ENCODE measurements at regions of chrX and their contacts with region 1.

Region 1: GRCh38 chrX:70096052-70096451 is 33.8 kb downstream of the OTUD6A start:
- DNase-seq: no peak
- H3K4me3 Mint-ChIP-seq: no peak overlapping the region
- H3K27ac Mint-ChIP-seq: no peak overlapping the region
- H3K4me1 Mint-ChIP-seq: no peaks in the 10 kb centered on the region
- H3K27me3 Mint-ChIP-seq: peaks cover 6% of the 10 kb centered on the region

Region 2: GRCh38 chrX:69538321-69538876 is 557.7 kb before region 1 on chrX:
- CTCF ChIA-PET with region 1: interaction called, 20 read pairs
- POLR2A ChIA-PET with region 1: no interaction called
- DNase-seq: peak; percentile 78
- H3K4me3 Mint-ChIP-seq: no peak overlapping the region
- H3K27ac Mint-ChIP-seq: no peak overlapping the region
- H3K4me1 Mint-ChIP-seq: peaks cover 15% of the 10 kb centered on the region
- H3K27me3 Mint-ChIP-seq: peaks cover 9% of the 10 kb centered on the region

Region 3: DNA sequence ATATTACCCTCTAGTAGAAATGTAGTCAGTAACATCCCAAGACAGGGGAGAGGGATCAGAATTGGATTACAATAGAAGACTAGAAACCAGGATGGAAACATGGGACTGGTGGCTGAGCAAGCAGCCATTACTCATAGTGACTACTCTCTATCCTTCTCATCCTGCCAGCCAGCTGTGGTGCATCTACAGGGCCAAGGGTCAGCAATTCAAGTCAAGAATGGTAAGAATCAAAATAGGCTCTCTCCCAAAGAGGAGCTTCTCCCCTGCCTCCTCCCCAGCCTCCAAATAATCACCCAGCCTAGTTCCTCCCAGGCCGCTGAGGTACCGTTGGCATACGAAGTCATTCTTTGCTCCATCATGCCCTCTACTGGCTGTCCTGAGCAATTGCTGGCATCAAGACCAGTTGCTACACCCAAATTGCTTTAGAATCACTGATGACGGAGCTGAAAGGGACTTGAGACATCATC is 65.7 kb before region 1 on chrX:
- CTCF ChIA-PET with region 1: interaction called, 30 read pairs
- POLR2A ChIA-PET with region 1: no interaction called
- DNase-seq: peak; percentile 49
- H3K4me3 Mint-ChIP-seq: no peak overlapping the region
- H3K27ac Mint-ChIP-seq: no peak overlapping the region
- H3K4me1 Mint-ChIP-seq: peaks cover 41% of the 10 kb centered on the region
- H3K27me3 Mint-ChIP-seq: no peaks in the 10 kb centered on the region